Gastrocnemius medialis (tissue), 4 donors: ENCODE measurements at regions of chrX and their contacts with region 1.

Region 1: GRCh38 chrX:43860646-43861370 is 21.4 kb downstream of the MAOB start:
- DNase-seq: no peak
- ATAC-seq: no peak
- H3K4me3 ChIP-seq: no peak overlapping the region
- H3K27ac ChIP-seq: peak overlapping the region; percentile 79 to 87 (median 82)
- H3K4me1 ChIP-seq: peaks cover 11 to 27% of the 10 kb centered on the region in 2 donors
- H3K27me3 ChIP-seq: peaks cover 0 to 9% (median 0%) of the 10 kb centered on the region in 3 donors
- CTCF ChIP-seq: no peak
- POLR2A ChIP-seq: no peak

Region 2: DNA sequence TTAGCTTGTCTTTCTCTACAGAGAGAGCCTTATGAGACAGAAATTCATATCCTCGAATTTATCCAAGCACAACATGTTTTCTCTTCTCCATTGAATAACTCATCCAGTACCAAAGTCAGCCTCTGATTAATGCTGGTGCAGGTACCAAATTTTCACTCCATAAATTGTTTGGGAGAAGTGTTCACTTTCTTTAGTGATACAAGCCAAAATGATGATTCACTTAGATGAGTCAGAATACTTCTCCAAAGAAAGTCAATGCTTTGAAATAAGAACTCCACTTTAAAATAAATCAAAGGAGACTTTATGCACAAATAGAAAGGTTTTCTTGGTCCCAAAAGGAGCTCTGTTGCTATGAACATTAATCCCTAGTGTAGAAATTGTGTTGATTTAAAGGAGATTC is 38.8 kb before region 1 on chrX:
- in situ Hi-C with region 1: no loop called
- intact Hi-C with region 1: loop called (anchors 1 kb)
- DNase-seq: no peak
- ATAC-seq: no peak
- H3K4me3 ChIP-seq: no peak overlapping the region
- H3K27ac ChIP-seq: peak overlapping the region in 2 of 4 donors; percentile 40 to 62
- H3K4me1 ChIP-seq: peaks cover 0 to 5% of the 10 kb centered on the region in 2 donors
- H3K27me3 ChIP-seq: no peaks in the 10 kb centered on the region
- CTCF ChIP-seq: no peak
- POLR2A ChIP-seq: no peak

Region 3: DNA sequence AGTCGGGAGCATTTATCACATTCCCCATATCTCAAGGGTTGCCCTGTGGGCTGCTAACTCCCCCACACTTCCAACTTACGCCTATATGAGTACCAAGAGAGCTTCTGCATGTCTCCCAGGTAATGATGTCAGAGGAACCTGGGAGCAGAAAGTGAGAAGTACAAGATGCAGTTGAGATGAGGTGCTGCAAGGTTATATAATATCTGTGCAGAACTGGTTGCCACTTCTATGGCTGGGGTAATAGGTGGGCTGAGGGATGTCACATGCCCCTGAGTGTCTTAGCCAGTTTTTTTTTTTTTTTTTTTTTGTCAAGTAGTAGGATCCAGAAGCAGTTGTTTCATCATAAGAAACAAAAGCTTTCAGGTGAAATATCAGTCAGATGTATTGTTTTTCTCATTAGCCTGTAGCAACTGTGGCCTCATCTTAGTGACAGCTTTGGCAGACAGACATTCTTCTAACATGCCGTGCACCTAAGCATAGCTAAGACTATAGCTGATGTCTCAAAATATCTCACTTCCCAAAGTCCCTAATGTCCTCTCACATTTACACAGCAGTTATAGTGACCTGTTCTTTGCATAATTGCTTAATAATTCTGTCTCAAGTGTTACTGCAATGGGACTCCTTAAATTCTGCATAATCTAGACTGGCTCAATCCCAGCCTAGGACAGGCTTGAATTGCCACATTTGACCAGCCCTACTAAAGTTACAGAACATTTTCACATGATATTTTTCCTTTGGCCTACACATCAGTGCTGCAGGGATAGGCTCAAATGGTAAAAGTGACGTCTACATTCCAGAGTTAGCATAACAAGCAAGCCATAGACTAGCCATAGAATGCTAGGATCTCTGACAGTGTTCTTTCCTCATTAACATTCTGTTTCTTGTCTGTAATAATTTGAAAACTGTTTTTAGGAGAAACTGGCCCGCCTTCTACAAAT is 39.3 kb after region 1 on chrX:
- in situ Hi-C with region 1: no loop called
- intact Hi-C with region 1: loop called (anchors 5 kb)
- DNase-seq: peak; percentile 17 to 57
- ATAC-seq: peak; percentile 83 to 92
- H3K4me3 ChIP-seq: no peak overlapping the region
- H3K27ac ChIP-seq: peak overlapping the region; percentile 71 to 84 (median 78)
- H3K4me1 ChIP-seq: peaks cover 4 to 14% of the 10 kb centered on the region in 2 donors
- H3K27me3 ChIP-seq: no peaks in the 10 kb centered on the region
- CTCF ChIP-seq: no peak
- POLR2A ChIP-seq: no peak

Region 4: GRCh38 chrX:44025555-44025954 is 164.7 kb after region 1 on chrX:
- in situ Hi-C with region 1: no loop called
- intact Hi-C with region 1: no loop called
- DNase-seq: no peak
- ATAC-seq: no peak
- H3K4me3 ChIP-seq: no peak overlapping the region
- H3K27ac ChIP-seq: no peak overlapping the region
- H3K4me1 ChIP-seq: no peaks in the 10 kb centered on the region
- H3K27me3 ChIP-seq: no peaks in the 10 kb centered on the region
- CTCF ChIP-seq: no peak
- POLR2A ChIP-seq: no peak